H1 (cell line): ENCODE measurements at regions of chr3 and their contacts with region 1.

Region 1: DNA sequence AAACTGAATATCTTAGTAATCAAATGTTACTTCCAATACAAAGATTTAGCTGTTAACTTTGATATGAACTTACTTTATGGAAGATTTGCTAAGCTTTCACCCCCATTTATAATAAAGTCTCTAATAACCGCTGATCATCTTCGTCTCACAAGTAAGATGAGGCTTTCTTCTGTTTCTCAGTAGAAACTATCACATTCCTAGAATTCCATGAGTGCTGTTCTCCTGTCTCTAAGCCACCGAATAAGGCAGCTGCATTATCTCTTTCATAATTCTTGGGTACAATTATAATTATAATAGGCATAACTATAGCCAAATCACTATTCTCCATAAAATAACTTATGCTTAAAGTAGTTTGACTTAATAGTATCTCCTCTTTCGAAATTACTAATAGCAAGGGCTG is 18.3 kb upstream of the SETMAR start:
- DNase-seq: no peak
- H3K4me3 ChIP-seq: no peak overlapping the region
- H3K27ac ChIP-seq: no peak overlapping the region
- H3K4me1 ChIP-seq: no peaks in the 10 kb centered on the region; a peak in 1 of 7 replicates
- H3K27me3 ChIP-seq: no peaks in the 10 kb centered on the region
- CTCF ChIP-seq: no peak
- EP300 ChIP-seq: no peak
- POLR2A ChIP-seq: no peak
- RAD21 ChIP-seq: no peak

Region 2: DNA sequence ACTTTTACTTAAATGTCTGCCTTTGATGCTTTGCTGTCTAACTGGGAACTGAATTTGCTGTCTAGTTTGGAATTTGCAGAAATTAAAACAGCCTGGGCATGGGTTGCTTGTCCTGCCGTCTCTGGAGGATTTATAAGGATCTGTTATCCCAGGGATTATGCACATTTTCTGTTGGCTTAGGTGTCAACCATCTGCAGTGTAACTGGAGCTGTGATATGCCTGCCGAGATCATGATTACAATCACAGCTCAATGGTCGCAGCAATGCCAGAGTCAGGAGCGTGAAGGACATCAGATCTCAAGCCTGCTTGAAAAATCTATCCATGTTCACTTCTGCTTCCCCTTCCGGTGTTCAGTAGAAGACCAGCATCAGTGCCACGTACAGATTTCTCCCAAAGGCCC is 23.5 kb before region 1 on chr3:
- CTCF ChIA-PET with region 1: no interaction called
- POLR2A ChIA-PET with region 1: no interaction called
- DNase-seq: no peak
- H3K4me3 ChIP-seq: no peak overlapping the region
- H3K27ac ChIP-seq: no peak overlapping the region
- H3K4me1 ChIP-seq: no peaks in the 10 kb centered on the region
- H3K27me3 ChIP-seq: no peaks in the 10 kb centered on the region
- CTCF ChIP-seq: no peak
- EP300 ChIP-seq: no peak
- POLR2A ChIP-seq: no peak
- RAD21 ChIP-seq: no peak

Region 3: DNA sequence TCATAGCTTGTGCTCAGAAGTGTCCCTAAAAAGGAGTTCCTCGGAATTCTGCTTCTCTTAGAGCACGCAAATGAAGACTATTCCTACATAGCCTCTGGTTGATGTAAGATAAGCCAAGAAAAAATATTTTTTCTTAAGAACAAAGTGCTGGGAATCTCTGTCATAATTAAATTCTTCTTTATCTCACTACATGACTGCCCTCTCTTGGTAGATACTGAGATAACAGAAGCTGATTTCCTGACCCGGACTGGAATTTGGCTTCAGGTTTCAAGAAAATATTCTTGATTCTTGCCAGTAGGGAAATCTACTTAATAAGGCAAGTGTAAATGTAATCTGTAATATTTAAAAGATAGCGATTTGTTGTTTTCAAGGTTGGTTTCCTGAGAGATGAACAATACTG is 13.0 kb before region 1 on chr3:
- CTCF ChIA-PET with region 1: interaction called, 34 read pairs
- POLR2A ChIA-PET with region 1: interaction called, 3 read pairs
- DNase-seq: no peak
- H3K4me3 ChIP-seq: no peak overlapping the region
- H3K27ac ChIP-seq: no peak overlapping the region
- H3K4me1 ChIP-seq: no peaks in the 10 kb centered on the region; a peak in 2 of 7 replicates
- H3K27me3 ChIP-seq: no peaks in the 10 kb centered on the region; a peak in 1 of 7 replicates
- CTCF ChIP-seq: peak in 2 of 3 experiments; percentile 50; a peak in 2 of 4 replicates
- EP300 ChIP-seq: no peak
- POLR2A ChIP-seq: no peak
- RAD21 ChIP-seq: peak; percentile 78 to 81

Region 4: GRCh38 chr3:4297486-4297885 is 12.6 kb after region 1 on chr3:
- CTCF ChIA-PET with region 1: interaction called, 20 read pairs
- POLR2A ChIA-PET with region 1: interaction called, 4 read pairs
- DNase-seq: no peak
- H3K4me3 ChIP-seq: no peak overlapping the region
- H3K27ac ChIP-seq: no peak overlapping the region
- H3K4me1 ChIP-seq: no peaks in the 10 kb centered on the region
- H3K27me3 ChIP-seq: no peaks in the 10 kb centered on the region
- CTCF ChIP-seq: no peak
- EP300 ChIP-seq: no peak
- POLR2A ChIP-seq: no peak
- RAD21 ChIP-seq: no peak